ENCODE measurements at regions of chr1 and their contacts with region 1.

Region 1: GRCh38 chr1:8854240-8854639 is 24.2 kb downstream of the ENO1 start:
- DNase-seq: no peak
- ATAC-seq: peak in 1 of 4 donors; percentile 2
- H3K4me3 ChIP-seq: no peak overlapping the region
- H3K27ac ChIP-seq: no peak overlapping the region
- H3K4me1 ChIP-seq: peaks cover 12% of the 10 kb centered on the region
- H3K27me3 ChIP-seq: no peaks in the 10 kb centered on the region
- CTCF ChIP-seq: no peak

Region 2: GRCh38 chr1:8554956-8555534 is 299.2 kb before region 1 on chr1:
- intact Hi-C with region 1: loop called (anchors 5 kb)
- DNase-seq: no peak
- ATAC-seq: peak in 1 of 4 donors; percentile 56
- H3K4me3 ChIP-seq: no peak overlapping the region
- H3K27ac ChIP-seq: no peak overlapping the region
- H3K4me1 ChIP-seq: peaks cover 13% of the 10 kb centered on the region
- H3K27me3 ChIP-seq: no peaks in the 10 kb centered on the region
- CTCF ChIP-seq: no peak

Region 3: GRCh38 chr1:8721679-8722324 is 132.4 kb before region 1 on chr1:
- intact Hi-C with region 1: loop called (anchors 5 kb)
- DNase-seq: no peak
- ATAC-seq: no peak
- H3K4me3 ChIP-seq: no peak overlapping the region
- H3K27ac ChIP-seq: no peak overlapping the region
- H3K4me1 ChIP-seq: peaks cover 7% of the 10 kb centered on the region
- H3K27me3 ChIP-seq: no peaks in the 10 kb centered on the region
- CTCF ChIP-seq: no peak

Region 4: GRCh38 chr1:8809342-8809736 is 44.9 kb before region 1 on chr1:
- intact Hi-C with region 1: no loop called
- DNase-seq: no peak
- ATAC-seq: no peak
- H3K4me3 ChIP-seq: no peak overlapping the region
- H3K27ac ChIP-seq: no peak overlapping the region
- H3K4me1 ChIP-seq: peaks cover 16% of the 10 kb centered on the region
- H3K27me3 ChIP-seq: no peaks in the 10 kb centered on the region
- CTCF ChIP-seq: no peak